ENCODE measurements at regions of chr6 and their contacts with region 1.

Region 1: GRCh38 chr6:33633462-33634158 is 12.5 kb downstream of the ITPR3 start:
- DNase-seq: peak; percentile 74
- H3K4me3 ChIP-seq: peak overlapping the region in 2 of 3 experiments; percentile 37 to 52
- H3K27ac ChIP-seq: no peak overlapping the region
- H3K4me1 ChIP-seq: peaks cover 24% of the 10 kb centered on the region
- H3K27me3 ChIP-seq: no peaks in the 10 kb centered on the region
- CTCF ChIP-seq: no peak

Region 2: DNA sequence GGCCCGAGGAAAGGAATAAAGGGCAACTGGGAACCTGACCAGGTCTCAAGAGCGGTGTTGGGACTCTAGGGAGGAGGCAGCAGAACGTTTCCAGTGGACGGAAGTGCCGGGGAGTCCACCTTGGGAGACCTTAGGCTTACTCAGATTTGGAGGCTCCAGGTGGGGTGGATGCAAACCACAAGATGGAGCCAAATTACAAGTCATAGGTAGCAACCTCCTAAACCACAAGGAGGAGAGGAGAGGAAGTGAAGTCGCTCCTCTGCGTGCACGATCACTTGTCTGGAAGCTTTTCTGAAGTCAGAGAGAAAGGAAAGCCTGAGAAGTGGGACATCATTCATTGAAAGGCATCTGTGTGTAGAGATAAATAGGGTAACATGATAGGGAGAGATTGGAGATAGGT is 633.6 kb before region 1 on chr6:
- CTCF ChIA-PET with region 1: no interaction called
- dilution Hi-C with region 1: no loop called
- in situ Hi-C with region 1: no loop called
- intact Hi-C with region 1: no loop called
- DNase-seq: peak; percentile 29
- H3K4me3 ChIP-seq: no peak overlapping the region
- H3K27ac ChIP-seq: no peak overlapping the region
- H3K4me1 ChIP-seq: no peaks in the 10 kb centered on the region
- H3K27me3 ChIP-seq: peaks cover 7% of the 10 kb centered on the region
- CTCF ChIP-seq: peak; percentile 21 to 32

Region 3: GRCh38 chr6:33288921-33289748 is 344.5 kb before region 1 on chr6 and contains the starts of genes PFDN6 and WDR46:
- CTCF ChIA-PET with region 1: no interaction called
- dilution Hi-C with region 1: no loop called
- in situ Hi-C with region 1: no loop called
- intact Hi-C with region 1: no loop called
- DNase-seq: peak; percentile 90
- H3K4me3 ChIP-seq: peak within 1 kb of the TSS; percentile 69 to 92 (median 76)
- H3K27ac ChIP-seq: peak within 1 kb of the TSS; percentile 66
- H3K4me1 ChIP-seq: peaks cover 17% of the 10 kb centered on the region
- H3K27me3 ChIP-seq: no peaks in the 10 kb centered on the region
- CTCF ChIP-seq: no peak
- total RNA-seq, gene PFDN6: 15.2 to 59.2 TPM
- total RNA-seq, gene WDR46: 55.0 to 55.3 TPM

Region 4: GRCh38 chr6:33417903-33418689 is 215.5 kb before region 1 on chr6 and contains the start of gene CUTA:
- CTCF ChIA-PET with region 1: no interaction called
- dilution Hi-C with region 1: no loop called
- in situ Hi-C with region 1: no loop called
- intact Hi-C with region 1: loop called (anchors 10 kb)
- DNase-seq: peak; percentile 100
- H3K4me3 ChIP-seq: peak within 1 kb of the TSS; percentile 56 to 75 (median 73)
- H3K27ac ChIP-seq: peak within 1 kb of the TSS; percentile 87
- H3K4me1 ChIP-seq: peaks cover 23% of the 10 kb centered on the region
- H3K27me3 ChIP-seq: no peaks in the 10 kb centered on the region
- CTCF ChIP-seq: peak in 1 of 2 donors; percentile 34
- total RNA-seq, gene CUTA: 81.4 to 181 TPM

Region 5: DNA sequence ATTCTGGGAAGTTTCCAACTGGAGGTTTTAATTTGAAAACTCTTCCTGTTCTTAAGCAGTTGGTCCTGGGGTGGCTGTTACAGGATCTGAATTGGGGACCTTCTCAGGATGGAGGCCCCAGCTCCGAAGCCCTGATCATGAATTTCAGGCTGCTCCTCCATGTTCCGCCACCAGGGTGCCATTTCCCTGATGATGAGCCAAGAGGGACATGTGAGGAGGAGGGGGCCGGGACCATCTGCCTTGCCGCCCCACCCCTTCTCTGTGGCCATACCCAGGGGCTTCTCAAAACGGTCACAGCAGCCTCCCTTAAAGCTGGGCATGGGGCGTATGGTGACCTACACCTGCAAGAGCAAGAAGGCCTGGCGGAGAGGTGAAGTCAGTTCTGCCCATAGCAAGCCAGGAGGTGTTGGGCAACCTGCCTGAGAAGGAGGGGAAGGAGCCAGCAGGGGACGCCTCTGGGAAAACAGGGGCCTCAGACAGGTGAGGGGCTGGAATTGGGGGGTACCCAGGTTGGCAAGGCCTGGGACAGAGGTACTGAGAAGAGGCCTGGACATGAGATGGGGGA is 49.9 kb before region 1 on chr6:
- CTCF ChIA-PET with region 1: no interaction called
- dilution Hi-C with region 1: no loop called
- in situ Hi-C with region 1: no loop called
- intact Hi-C with region 1: no loop called
- DNase-seq: no peak
- H3K4me3 ChIP-seq: no peak overlapping the region
- H3K27ac ChIP-seq: no peak overlapping the region
- H3K4me1 ChIP-seq: peaks cover 13% of the 10 kb centered on the region
- H3K27me3 ChIP-seq: no peaks in the 10 kb centered on the region
- CTCF ChIP-seq: peak; percentile 41 to 49